Natural killer cell (primary cell): ENCODE measurements at regions of chr13 and their contacts with region 1.

Region 1: DNA sequence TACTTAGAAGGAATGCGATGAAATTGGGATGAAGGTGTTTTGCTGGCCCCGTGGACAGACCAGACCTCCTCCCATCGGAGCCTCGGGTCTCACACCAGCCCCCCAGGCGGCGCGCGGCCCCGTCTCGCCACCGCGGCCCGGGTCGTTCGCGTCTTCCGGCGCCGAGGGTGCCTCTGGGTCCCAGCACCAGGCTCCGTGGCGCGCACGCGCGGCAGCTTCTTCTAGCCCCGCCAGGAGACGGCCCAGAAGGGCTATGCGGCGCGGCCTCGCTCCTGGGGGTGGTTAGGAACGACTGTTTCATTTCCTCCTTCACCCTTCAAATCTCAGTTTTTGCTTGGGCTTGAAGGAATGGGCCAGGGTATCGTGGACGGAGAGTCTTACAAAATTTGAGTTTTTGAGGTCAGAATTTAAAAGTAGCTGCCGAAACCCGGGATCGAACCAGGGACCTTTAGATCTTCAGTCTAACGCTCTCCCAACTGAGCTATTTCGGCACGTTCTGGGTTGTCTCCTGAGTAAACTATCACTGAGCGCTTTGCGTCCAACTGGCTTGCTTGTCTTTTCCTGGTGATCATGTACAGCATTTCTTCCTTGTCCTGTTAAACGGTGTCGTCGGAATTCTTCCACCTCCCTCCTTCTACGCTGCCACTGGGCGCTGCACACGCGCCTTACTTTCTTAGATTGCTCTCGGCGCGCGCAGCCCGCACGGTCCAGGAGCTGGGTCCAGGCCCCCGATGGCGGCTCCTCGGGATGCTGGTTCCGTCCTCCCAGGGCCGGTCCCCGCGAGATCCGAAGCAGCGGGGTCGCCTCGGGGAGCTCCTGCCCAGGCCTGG is 46.5 kb downstream of the TGDS start:
- DNase-seq: peak; percentile 90 to 96
- ATAC-seq: peak; percentile 88 to 93 (median 89)
- H3K4me3 ChIP-seq: peak overlapping the region; percentile 93
- H3K4me3 Mint-ChIP-seq: peak overlapping the region; percentile 91
- H3K27ac ChIP-seq: peak overlapping the region; percentile 94
- H3K27ac Mint-ChIP-seq: peak overlapping the region; percentile 94 to 99
- H3K4me1 ChIP-seq: peaks cover 15% of the 10 kb centered on the region
- H3K4me1 Mint-ChIP-seq: peaks cover 21 to 26% of the 10 kb centered on the region in 2 donors
- H3K27me3 ChIP-seq: no peaks in the 10 kb centered on the region
- H3K27me3 Mint-ChIP-seq: peaks cover 0 to 6% of the 10 kb centered on the region in 2 donors
- CTCF ChIP-seq: no peak

Region 2: DNA sequence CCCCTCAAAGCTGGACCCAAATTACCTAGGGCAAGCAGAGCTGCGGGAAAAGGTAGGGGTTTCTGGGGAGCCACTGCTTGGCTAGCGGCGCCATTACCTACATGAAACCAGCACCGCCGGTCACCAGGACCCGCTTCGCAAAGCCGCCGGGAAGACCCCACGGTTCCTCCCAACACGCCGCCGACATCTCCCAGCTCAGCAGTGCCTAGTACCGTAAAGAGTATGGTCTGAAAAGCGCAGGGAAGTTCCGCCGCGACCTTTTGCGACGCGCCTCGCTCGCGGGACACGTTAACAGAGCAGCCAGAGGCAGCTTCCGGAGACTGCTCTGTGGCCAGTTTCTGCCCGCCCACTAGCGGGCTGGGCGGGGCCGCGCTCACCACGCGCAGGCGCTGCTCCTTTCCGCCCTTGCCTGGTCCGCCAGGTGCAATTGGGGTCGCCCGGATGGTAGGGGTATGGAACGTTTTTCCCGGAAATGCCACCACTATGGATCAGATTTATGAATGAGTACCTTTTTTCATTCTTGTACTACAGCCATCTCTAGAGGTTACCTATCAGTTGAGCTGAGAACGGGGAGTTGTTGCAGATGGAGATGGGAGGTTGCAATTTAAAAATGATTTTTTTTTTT is 46.6 kb after region 1 on chr13 and contains the start of gene TGDS:
- intact Hi-C with region 1: loop called (anchors 1 kb)
- DNase-seq: peak; percentile 87 to 95
- ATAC-seq: peak; percentile 98 to 100 (median 98)
- H3K4me3 ChIP-seq: peak within 1 kb of the TSS; percentile 78
- H3K4me3 Mint-ChIP-seq: peak within 1 kb of the TSS; percentile 97
- H3K27ac ChIP-seq: peak within 1 kb of the TSS; percentile 64
- H3K27ac Mint-ChIP-seq: peak within 1 kb of the TSS; percentile 89 to 94
- H3K4me1 ChIP-seq: peaks cover 17% of the 10 kb centered on the region
- H3K4me1 Mint-ChIP-seq: peaks cover 27 to 40% of the 10 kb centered on the region in 2 donors
- H3K27me3 ChIP-seq: no peaks in the 10 kb centered on the region
- H3K27me3 Mint-ChIP-seq: no peaks in the 10 kb centered on the region
- CTCF ChIP-seq: no peak
- total RNA-seq, gene TGDS: 6.9 to 9.0 (median 7.7) TPM